ENCODE measurements at regions of chrX and their contacts with region 1.

Region 1: GRCh38 chrX:11381464-11381863 is 88.3 kb downstream of the AMELX start:
- DNase-seq: peak; percentile 78
- H3K4me3 Mint-ChIP-seq: no peak overlapping the region
- H3K27ac Mint-ChIP-seq: no peak overlapping the region
- H3K4me1 Mint-ChIP-seq: peaks cover 10% of the 10 kb centered on the region
- H3K27me3 Mint-ChIP-seq: no peaks in the 10 kb centered on the region
- CTCF ChIP-seq: peak; percentile 46

Region 2: GRCh38 chrX:11341274-11342201 is 39.9 kb before region 1 on chrX:
- CTCF ChIA-PET with region 1: interaction called, 9 read pairs
- POLR2A ChIA-PET with region 1: no interaction called
- intact Hi-C with region 1: loop called (anchors 5 kb)
- DNase-seq: peak; percentile 74
- H3K4me3 Mint-ChIP-seq: no peak overlapping the region
- H3K27ac Mint-ChIP-seq: peak overlapping the region; percentile 46
- H3K4me1 Mint-ChIP-seq: peaks cover 11% of the 10 kb centered on the region
- H3K27me3 Mint-ChIP-seq: peaks cover 21% of the 10 kb centered on the region
- CTCF ChIP-seq: no peak

Region 3: DNA sequence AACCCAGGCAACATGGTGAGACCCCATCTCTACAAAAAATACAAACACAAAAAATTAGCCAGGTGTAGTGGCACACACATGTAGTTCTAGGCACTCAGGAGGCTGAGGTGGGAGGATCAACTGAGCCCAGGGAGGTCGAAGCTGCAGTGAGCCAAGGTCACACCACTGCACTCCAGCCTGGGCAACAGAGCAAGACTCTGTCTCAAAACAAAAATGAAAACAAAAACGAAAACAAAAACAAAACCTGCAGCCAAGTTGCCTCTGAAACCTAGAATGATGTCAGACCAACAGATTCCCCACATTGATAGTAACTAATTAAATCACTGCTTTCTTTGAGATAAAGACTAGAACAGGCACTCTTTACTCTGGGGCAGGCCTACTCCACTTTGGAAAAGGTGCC is 16.2 kb after region 1 on chrX:
- CTCF ChIA-PET with region 1: interaction called, 19 read pairs
- POLR2A ChIA-PET with region 1: no interaction called
- intact Hi-C with region 1: no loop called
- DNase-seq: no peak
- H3K4me3 Mint-ChIP-seq: no peak overlapping the region
- H3K27ac Mint-ChIP-seq: no peak overlapping the region
- H3K4me1 Mint-ChIP-seq: no peaks in the 10 kb centered on the region
- H3K27me3 Mint-ChIP-seq: peaks cover 11% of the 10 kb centered on the region
- CTCF ChIP-seq: no peak

Region 4: DNA sequence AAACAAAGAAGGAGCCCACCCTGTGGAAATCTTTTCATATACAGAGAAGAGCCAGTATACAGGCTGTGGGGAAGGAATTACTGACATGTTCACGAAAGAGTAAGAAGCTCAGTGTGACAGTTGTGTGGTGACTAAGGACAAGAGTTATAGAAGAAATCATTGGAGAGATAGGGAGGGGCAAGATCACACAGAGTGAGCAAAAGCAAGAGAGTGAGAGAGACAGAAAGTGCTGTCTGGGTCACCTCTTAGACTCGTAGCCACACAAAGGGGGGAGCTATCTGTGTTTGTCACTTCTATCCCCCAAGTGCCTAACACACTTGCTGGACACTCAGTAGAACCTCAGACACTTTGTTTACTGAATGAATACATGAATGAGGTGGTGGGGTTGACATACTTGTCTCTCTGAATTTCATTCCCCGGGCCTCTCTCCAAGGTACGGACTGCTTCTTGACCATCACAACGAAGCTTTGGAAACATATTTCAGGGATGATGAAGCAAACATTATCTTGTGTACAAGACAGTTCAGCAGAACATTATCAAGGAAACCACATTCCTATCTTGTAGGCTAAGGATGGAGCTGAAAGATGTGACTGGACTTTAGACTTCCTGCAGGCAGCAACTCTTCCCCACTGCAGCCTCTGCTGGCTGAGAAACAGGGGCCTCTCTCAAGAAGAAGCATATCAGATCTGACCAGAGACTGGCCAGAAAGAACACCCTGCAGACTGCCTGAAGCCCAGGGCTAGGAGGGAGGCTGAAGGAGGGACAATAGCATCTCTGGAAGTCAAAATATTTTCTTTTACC is 79.9 kb after region 1 on chrX:
- CTCF ChIA-PET with region 1: interaction called, 21 read pairs
- POLR2A ChIA-PET with region 1: no interaction called
- intact Hi-C with region 1: no loop called
- DNase-seq: no peak
- H3K4me3 Mint-ChIP-seq: no peak overlapping the region
- H3K27ac Mint-ChIP-seq: no peak overlapping the region
- H3K4me1 Mint-ChIP-seq: peaks cover 17% of the 10 kb centered on the region
- H3K27me3 Mint-ChIP-seq: peaks cover 33% of the 10 kb centered on the region
- CTCF ChIP-seq: no peak

Region 5: DNA sequence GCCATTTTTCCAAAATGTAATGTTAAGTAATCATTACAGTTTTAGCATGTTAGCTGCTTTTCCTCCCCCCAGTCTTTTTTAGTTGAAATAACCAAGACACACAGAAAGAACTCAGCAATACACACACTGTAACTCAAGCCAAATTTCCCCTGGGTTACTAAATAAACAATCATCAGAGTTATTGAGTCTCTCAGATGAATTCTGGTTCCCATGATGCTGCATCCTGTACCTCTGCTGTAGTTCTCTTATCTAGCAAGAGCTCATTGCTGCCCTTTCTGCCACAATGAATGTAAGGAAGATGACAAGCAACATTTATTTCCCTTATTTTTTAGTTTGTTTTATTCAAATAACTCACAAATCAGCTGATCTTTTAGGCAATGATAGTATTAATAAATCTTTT is 99.2 kb after region 1 on chrX:
- CTCF ChIA-PET with region 1: interaction called, 10 read pairs
- POLR2A ChIA-PET with region 1: no interaction called
- intact Hi-C with region 1: loop called (anchors 10 kb)
- DNase-seq: no peak
- H3K4me3 Mint-ChIP-seq: no peak overlapping the region
- H3K27ac Mint-ChIP-seq: no peak overlapping the region
- H3K4me1 Mint-ChIP-seq: no peaks in the 10 kb centered on the region
- H3K27me3 Mint-ChIP-seq: peaks cover 83% of the 10 kb centered on the region
- CTCF ChIP-seq: no peak

Region 6: GRCh38 chrX:11770320-11770719 is 388.9 kb after region 1 on chrX:
- CTCF ChIA-PET with region 1: interaction called, 8 read pairs
- POLR2A ChIA-PET with region 1: no interaction called
- intact Hi-C with region 1: loop called (anchors 5 kb)
- DNase-seq: peak; percentile 72
- H3K4me3 Mint-ChIP-seq: no peak overlapping the region
- H3K27ac Mint-ChIP-seq: no peak overlapping the region
- H3K4me1 Mint-ChIP-seq: peaks cover 6% of the 10 kb centered on the region
- H3K27me3 Mint-ChIP-seq: peaks cover 11% of the 10 kb centered on the region
- CTCF ChIP-seq: peak; percentile 74

Region 7: GRCh38 chrX:11792461-11793421 is 411.3 kb after region 1 on chrX:
- CTCF ChIA-PET with region 1: no interaction called
- POLR2A ChIA-PET with region 1: no interaction called
- intact Hi-C with region 1: no loop called
- DNase-seq: no peak
- H3K4me3 Mint-ChIP-seq: no peak overlapping the region
- H3K27ac Mint-ChIP-seq: no peak overlapping the region
- H3K4me1 Mint-ChIP-seq: no peaks in the 10 kb centered on the region
- H3K27me3 Mint-ChIP-seq: peaks cover 19% of the 10 kb centered on the region
- CTCF ChIP-seq: no peak

Measured in MCF 10A (cell line).